Testis (tissue), 5 donors: ENCODE measurements at regions of chr1 and their contacts with region 1.

Region 1: GRCh38 chr1:67005068-67005467 is 48.9 kb downstream of the SLC35D1 start:
- DNase-seq: no peak
- H3K4me3 ChIP-seq: no peak overlapping the region
- H3K27ac ChIP-seq: no peak overlapping the region
- H3K4me1 ChIP-seq: no peaks in the 10 kb centered on the region
- H3K27me3 ChIP-seq: no peaks in the 10 kb centered on the region
- CTCF ChIP-seq: no peak
- POLR2A ChIP-seq: no peak

Region 2: GRCh38 chr1:67149179-67149770 is 144.2 kb after region 1 on chr1:
- intact Hi-C with region 1: loop called (anchors 10 kb)
- DNase-seq: peak; percentile 83
- H3K4me3 ChIP-seq: no peak overlapping the region
- H3K27ac ChIP-seq: no peak overlapping the region
- H3K4me1 ChIP-seq: peaks cover 8% of the 10 kb centered on the region
- H3K27me3 ChIP-seq: no peaks in the 10 kb centered on the region
- CTCF ChIP-seq: peak; percentile 55 to 66 (median 61)
- POLR2A ChIP-seq: no peak